AG04450 (cell line): ENCODE measurements at regions of chr17 and their contacts with region 1.

Region 1: DNA sequence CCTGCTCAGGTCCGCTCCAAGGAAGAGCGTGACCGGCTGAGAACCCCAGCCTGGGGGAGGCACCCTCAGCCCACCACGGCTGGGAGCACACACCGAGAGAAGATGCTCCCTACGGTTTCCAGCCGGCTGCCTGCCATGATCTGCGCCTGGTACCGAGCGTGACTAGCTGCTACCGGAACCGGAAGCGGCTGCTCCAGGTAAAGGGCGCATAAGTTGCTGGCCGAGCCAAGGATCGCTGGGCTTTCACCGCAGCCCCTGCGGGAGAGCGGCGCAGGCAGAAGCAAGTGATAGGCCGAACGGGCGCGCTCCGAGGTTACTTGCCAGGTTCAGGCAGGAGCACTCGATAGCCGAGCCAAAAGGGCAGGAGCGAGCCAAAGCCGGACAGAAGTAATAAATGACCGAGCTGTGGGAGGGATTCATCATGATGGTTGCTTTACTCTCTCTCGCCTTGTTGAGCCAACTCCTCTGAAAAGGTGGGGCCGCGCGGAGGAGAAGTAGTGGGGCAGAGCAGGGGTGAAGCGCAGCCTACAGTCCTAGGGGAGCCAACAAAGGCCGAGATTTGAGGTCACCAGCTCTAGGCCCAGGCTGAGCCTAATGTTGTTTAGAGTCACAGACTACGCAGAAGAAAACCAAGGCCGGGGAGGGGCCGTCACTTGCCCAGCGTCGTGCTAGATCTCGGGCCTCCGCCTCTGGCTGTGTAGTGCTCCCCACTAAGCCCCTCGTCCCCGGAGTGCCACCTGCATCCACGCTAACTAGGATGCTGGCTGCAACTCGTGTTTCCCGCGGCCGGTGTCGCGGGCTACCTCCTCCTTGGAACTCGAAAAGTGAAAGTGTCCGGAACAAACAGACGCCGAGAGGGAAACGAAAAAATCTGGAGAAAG is at the start of gene MRPS23:
- DNase-seq: peak; percentile 97
- H3K4me3 ChIP-seq: peak within 1 kb of the TSS; percentile 99
- H3K27ac ChIP-seq: peak within 1 kb of the TSS; percentile 85
- H3K27me3 ChIP-seq: no peaks in the 10 kb centered on the region
- CTCF ChIP-seq: no peak
- polyA plus RNA-seq, gene MRPS23: 27.5 and 34.1 TPM in 2 replicates

Region 2: GRCh38 chr17:57739402-57740392 is 110.4 kb before region 1 on chr17:
- CTCF ChIA-PET with region 1: no interaction called
- POLR2A ChIA-PET with region 1: no interaction called
- DNase-seq: no peak
- H3K4me3 ChIP-seq: no peak overlapping the region
- H3K27ac ChIP-seq: no peak overlapping the region
- H3K27me3 ChIP-seq: peaks cover 6% of the 10 kb centered on the region
- CTCF ChIP-seq: peak; percentile 23; the same call in 1 of the 2 replicates

Region 3: GRCh38 chr17:58028578-58028977 is 178.5 kb after region 1 on chr17:
- CTCF ChIA-PET with region 1: no interaction called
- POLR2A ChIA-PET with region 1: interaction called, 13 read pairs
- DNase-seq: no peak
- H3K4me3 ChIP-seq: no peak overlapping the region
- H3K27ac ChIP-seq: no peak overlapping the region
- H3K27me3 ChIP-seq: peaks cover 4% of the 10 kb centered on the region
- CTCF ChIP-seq: no peak